Activated naive CD4-positive, alpha-beta T cell treated with anti-CD3 and anti-CD28 coated beads, Interleukin-2, amount 10 ng/mL, durations not matched to agents 7 days and 5 days (primary cell): ENCODE measurements at regions of chr14 and their contacts with region 1.

Region 1: DNA sequence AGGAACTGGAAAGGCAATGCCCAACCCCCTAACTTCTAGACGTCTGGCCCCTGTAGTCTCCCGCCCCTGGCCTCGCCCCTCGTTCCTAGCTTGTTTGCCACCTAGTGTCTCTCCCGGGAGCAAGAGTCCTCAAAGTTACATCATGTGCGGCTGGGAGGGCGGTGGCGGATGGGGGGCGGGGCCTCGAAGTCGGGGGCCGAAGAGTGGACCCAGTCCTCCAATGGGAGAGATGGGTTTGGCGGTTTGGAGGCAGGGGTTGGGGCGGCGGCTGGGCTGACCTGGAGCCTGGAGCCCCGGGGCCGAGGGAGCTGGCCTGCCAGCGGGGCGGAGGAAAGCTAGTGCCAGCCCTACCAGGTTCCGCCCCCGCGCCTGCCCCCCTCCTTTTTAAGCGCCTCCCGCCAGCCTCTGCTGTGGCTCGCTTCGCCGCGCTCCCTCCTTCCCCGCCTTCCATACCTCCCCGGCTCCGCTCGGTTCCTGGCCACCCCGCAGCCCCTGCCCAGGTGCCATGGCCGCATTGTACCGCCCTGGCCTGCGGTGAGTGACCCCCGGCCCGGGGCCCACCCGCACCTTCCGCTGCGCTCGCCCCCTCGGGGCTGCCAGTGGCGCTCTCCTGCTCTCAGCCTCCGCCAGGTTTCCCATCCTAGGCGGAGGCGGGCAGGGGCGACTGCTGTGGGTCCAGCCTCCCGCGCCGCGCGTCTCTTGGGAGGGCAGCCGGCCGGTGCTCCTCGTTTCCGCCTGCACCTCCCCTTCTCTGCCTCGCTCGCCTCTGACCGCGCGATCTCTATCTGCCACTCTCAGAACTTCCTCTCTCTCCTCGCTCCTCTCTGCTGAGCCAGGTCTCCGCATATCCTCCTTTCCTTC is at the start of gene PCK2:
- DNase-seq: peak; percentile 86
- H3K4me3 Mint-ChIP-seq: peak within 1 kb of the TSS; percentile 92
- H3K27ac Mint-ChIP-seq: peak within 1 kb of the TSS; percentile 92
- H3K4me1 Mint-ChIP-seq: peaks cover 39% of the 10 kb centered on the region
- H3K27me3 Mint-ChIP-seq: no peaks in the 10 kb centered on the region

Region 2: DNA sequence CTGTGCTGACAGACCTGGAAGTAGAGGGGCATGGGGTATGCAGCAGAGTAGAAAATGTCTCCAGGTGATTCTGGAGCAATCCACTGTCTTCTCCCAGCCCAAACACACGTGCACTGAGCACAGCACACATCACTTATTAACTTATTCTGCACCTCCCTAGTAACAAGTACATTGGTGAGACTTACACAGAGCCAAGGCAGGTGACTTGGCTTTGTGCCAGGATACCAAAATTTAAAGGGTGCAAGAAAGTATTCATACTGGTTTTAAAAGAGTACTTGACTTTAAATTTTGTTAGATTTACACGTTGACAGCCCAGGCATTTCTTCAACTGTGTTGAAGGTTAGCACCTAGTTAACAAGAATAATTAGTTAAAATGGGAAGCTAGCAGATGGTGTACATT is 53.4 kb before region 1 on chr14:
- CTCF ChIA-PET with region 1: no interaction called
- DNase-seq: no peak
- H3K4me3 Mint-ChIP-seq: no peak overlapping the region
- H3K27ac Mint-ChIP-seq: no peak overlapping the region
- H3K4me1 Mint-ChIP-seq: peaks cover 10% of the 10 kb centered on the region
- H3K27me3 Mint-ChIP-seq: peaks cover 37% of the 10 kb centered on the region

Region 3: GRCh38 chr14:24070285-24071143 is 23.6 kb before region 1 on chr14:
- CTCF ChIA-PET with region 1: interaction called, 107 read pairs
- DNase-seq: no peak
- H3K4me3 Mint-ChIP-seq: no peak overlapping the region
- H3K27ac Mint-ChIP-seq: no peak overlapping the region
- H3K4me1 Mint-ChIP-seq: peaks cover 10% of the 10 kb centered on the region
- H3K27me3 Mint-ChIP-seq: peaks cover 47% of the 10 kb centered on the region

Region 4: GRCh38 chr14:24108336-24108874 is 14.3 kb after region 1 on chr14:
- CTCF ChIA-PET with region 1: interaction called, 187 read pairs
- DNase-seq: no peak
- H3K4me3 Mint-ChIP-seq: no peak overlapping the region
- H3K27ac Mint-ChIP-seq: peak overlapping the region; percentile 97
- H3K4me1 Mint-ChIP-seq: peaks cover 37% of the 10 kb centered on the region
- H3K27me3 Mint-ChIP-seq: no peaks in the 10 kb centered on the region